Aorta (tissue), 5 donors: ENCODE measurements at regions of chr14 and their contacts with region 1.

Region 1: GRCh38 chr14:68795597-68796417 is 2.9 kb upstream of the ZFP36L1 start:
- DNase-seq: peak; percentile 92 to 96
- ATAC-seq: peak; percentile 70
- H3K4me3 ChIP-seq: peak overlapping the region; percentile 82 to 95
- H3K27ac ChIP-seq: peak overlapping the region; percentile 100
- H3K4me1 ChIP-seq: no peaks in the 10 kb centered on the region
- H3K27me3 ChIP-seq: peaks cover 0 to 2% of the 10 kb centered on the region in 2 donors

Region 2: DNA sequence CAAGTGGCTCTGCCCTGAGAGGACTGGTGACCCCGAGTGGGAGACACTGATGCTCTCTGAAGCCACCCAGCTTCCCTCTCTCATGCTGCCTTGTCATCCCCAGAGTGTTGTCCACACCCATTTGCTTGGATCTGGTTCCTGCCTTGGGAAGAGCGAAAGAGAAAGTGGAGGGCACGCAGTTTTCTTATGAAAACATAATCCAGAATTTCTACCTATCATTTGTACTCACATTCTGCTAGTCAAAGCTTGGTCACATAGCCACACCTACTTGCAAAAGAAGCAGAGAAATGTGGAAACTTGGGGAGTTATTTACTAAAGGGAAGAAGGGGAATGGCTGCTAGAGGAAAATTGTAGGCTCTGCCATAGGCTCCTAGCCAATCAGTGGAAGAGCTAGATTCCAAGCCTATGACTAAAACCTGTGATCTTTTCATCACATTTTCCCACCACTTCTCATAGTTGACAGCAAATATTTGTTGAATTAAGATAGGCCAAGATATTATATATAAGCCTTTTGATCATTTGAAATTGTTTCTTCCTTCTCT is 329.2 kb before region 1 on chr14:
- intact Hi-C with region 1: loop called in 1 of 2 experiments (anchors 5 kb)
- DNase-seq: peak in 1 of 2 donors; percentile 51
- ATAC-seq: peak; percentile 64
- H3K4me3 ChIP-seq: no peak overlapping the region
- H3K27ac ChIP-seq: peak overlapping the region in 1 of 2 donors; percentile 17
- H3K4me1 ChIP-seq: peaks cover 4 to 6% of the 10 kb centered on the region in 2 donors
- H3K27me3 ChIP-seq: no peaks in the 10 kb centered on the region

Region 3: DNA sequence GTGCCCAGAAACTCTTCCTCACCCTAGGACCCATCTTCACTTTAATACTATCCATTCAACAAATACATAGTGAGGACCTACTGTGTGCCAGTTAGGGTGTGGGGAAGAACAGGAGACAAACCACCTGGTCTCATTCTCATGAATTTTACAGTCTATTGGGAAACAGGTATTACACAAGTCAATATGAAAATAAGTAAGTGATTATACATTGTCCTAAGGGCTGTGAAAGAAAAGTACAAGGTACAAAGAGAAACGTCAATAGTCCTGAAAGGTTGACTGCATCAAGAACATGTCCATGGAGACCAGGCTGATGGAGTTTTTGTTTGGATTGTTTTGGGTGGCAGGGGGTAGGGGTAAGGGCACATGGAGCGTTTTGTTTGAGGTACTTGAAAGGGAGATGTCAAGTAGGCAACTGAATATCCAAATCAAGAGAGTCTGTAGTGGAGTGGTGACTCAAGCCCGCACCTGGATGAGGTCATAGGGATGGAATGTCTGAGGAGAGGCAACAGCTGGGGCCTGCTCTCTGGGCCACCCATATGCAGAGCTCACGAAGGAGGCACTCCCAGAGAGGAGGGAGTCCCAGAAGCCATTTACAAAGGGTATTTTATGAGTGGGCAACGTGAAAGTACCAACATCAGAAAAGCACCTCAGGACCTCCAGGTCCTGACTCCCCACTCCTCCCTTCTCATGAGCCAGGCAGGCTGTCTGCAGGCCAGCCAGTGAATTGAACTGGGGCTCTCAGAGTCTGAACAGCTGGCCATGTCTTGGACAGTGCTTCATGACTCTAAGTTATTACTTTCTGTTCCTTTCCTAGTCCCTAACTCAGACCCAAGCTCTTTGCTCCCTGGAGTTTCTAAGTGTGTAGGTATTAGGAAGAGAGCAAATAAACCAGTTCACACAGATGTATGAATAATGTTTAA is 274.9 kb before region 1 on chr14:
- intact Hi-C with region 1: loop called in 1 of 2 experiments (anchors 5 kb)
- DNase-seq: no peak
- ATAC-seq: no peak
- H3K4me3 ChIP-seq: no peak overlapping the region
- H3K27ac ChIP-seq: peak overlapping the region in 1 of 2 donors; percentile 50
- H3K4me1 ChIP-seq: peaks cover 4% of the 10 kb centered on the region in 2 donors
- H3K27me3 ChIP-seq: no peaks in the 10 kb centered on the region

Region 4: DNA sequence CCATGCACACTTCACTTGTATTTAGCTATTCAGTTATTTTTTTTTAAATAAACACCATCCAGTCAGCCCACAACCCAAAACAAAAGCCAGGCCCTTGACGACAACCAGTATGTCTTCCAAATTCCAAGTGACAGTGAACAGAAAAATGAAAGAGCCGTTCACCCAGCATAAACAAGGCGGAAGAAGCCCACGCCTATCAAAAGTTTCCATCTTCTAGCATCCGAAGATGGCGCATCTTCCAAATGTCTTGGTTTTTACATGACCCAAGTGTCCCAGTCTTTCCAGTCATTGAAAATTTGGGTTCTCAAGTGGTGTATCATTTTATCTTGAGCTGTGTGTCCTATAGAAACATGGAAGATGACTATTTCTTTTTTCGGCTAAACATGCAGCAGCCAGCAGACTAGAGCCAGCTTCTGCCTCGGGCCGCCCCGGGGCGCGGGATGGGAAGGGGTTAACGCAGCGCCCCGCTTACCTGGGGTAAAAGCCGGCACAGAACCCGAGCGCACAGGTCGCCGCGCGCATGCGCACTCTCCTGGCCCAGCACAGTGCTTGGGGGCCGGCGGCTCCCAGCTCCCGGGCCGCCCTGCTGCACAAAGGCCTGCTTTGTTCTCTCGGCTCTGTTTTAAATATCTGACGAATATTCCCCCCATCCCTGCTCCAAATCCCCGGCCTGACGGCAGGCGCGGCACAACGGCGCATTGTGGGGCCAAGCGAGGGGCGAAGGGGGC is 167.8 kb before region 1 on chr14:
- intact Hi-C with region 1: loop called in 1 of 2 experiments (anchors 2 kb)
- DNase-seq: peak; percentile 63 to 74
- ATAC-seq: no peak
- H3K4me3 ChIP-seq: no peak overlapping the region
- H3K27ac ChIP-seq: no peak overlapping the region
- H3K4me1 ChIP-seq: peaks cover 0 to 3% of the 10 kb centered on the region in 2 donors
- H3K27me3 ChIP-seq: no peaks in the 10 kb centered on the region

Region 5: DNA sequence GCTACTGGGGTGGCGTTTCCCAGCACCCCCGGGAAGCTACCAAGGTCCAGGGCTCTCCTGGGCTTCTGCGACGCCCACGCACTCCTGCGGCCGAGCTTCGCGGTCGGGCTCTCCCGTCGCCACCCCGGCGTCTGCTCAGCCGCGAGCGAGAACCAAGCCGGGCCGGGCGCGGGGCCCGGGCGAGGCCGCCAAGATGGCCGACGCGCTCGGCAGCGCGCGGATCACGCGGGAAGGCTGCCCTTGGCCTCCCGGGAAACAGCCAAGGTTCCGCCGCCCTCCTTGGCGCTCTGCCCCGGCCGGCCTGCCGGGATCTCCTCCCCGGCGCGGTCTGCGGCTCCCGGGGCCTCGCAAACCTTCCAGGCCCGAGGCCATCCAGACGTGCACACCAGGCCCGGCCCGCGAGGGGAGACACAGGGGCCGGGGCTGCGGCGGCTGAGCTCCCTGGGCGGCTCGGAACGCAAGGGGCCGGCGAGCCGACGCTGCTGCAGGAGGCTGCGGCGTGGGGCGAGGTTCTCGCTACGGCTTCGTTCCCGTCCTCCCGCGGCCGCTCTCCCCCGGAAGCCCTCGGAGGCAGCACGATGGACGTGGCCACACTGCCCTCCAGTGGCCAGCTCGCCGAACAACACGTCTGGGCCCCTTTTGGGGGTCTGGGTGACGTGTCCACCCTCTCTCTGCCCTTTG is 20.6 kb after region 1 on chr14:
- intact Hi-C with region 1: loop called in 1 of 2 experiments (anchors 1 kb)
- DNase-seq: peak; percentile 94 to 97
- ATAC-seq: peak; percentile 94
- H3K4me3 ChIP-seq: no peak overlapping the region
- H3K27ac ChIP-seq: peak overlapping the region; percentile 65 to 70
- H3K4me1 ChIP-seq: peaks cover 0 to 3% of the 10 kb centered on the region in 2 donors
- H3K27me3 ChIP-seq: no peaks in the 10 kb centered on the region

Region 6: DNA sequence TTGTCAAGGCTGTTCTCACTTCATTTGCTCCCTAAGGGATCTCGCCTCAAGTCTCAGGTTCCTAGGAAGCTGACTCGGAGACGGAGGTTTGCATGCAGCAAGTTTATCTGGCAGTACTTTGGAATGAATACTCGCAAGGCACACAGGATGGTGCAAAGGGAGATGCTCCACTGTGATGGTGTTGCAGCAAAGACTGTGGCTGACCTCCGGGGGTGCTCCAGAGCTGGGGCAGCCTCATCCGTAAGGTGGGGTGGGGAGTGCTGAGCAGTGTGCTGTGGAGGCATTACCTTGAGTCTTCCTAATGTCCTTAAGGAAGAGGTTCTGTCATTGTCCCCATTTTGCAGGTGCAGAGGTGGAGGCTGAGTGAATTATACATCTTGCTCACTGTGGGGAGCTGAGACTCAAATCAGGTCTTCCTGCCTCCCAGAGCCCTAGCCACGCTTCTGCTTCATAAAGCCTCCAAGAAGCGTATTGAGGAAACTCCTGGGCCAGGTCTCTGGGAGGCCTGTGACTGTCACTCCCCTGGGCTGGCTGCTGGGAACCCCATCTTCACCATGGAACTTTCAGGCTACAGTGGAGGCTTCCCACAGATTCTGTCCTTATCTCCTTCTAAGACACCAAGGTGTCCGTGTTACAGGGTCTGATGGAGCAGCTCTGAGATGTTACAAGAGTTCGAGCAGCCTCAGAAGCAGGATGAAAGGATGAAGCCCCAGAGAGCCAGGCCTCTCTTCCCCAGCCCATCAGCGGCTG is 503.7 kb after region 1 on chr14:
- intact Hi-C with region 1: no loop called
- DNase-seq: peak in 1 of 2 donors; percentile 47
- ATAC-seq: no peak
- H3K4me3 ChIP-seq: no peak overlapping the region
- H3K27ac ChIP-seq: no peak overlapping the region
- H3K4me1 ChIP-seq: no peaks in the 10 kb centered on the region
- H3K27me3 ChIP-seq: no peaks in the 10 kb centered on the region